ENCODE measurements at regions of chr2 and their contacts with region 1.

Region 1: DNA sequence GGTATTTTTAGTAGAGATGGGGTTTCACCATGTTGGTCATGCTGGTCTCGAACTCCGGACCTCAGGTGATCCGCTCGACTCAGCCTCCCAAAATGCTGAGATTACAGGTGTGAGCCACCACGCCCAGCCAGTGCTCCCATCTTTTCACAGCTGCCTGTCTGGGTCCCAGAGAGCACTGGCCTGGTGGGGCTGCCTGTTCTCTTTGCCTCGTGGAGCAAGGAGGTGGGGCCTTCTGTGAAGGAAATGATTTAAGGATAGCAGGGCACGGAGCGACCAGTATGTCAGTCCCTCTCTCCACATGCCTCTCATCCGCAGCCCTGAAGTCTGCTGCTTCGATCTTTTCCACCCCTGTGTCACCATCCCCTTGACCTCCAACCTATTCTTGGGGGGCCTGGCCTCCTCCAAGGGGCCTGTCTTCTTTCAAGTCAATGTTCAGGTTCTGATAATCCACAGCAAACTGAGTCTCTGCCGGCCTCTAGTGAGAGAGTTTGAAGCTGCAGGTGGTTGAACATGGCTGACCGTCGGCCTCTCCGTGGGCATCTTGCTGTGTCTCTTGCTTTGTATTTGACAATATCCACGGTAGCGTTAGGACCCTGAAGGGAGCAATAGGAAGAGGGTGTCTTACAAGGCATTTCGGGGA is 28.2 kb upstream of the GIGYF2 start:
- DNase-seq: peak; percentile 24
- ATAC-seq: peak; percentile 25; the same call in 1 of the 2 replicates
- H3K4me3 ChIP-seq: no peak overlapping the region
- H3K27ac ChIP-seq: no peak overlapping the region
- H3K4me1 ChIP-seq: peaks cover 9% of the 10 kb centered on the region; the same call in 1 of the 2 replicates
- H3K27me3 ChIP-seq: no peaks in the 10 kb centered on the region
- CTCF ChIP-seq: peak; percentile 68

Region 2: GRCh38 chr2:232611551-232612218 is 57.2 kb before region 1 on chr2:
- CTCF ChIA-PET with region 1: interaction called, 3 read pairs
- POLR2A ChIA-PET with region 1: no interaction called
- intact Hi-C with region 1: loop called (anchors 1 kb)
- DNase-seq: peak; percentile 93
- ATAC-seq: peak; percentile 97
- H3K4me3 ChIP-seq: no peak overlapping the region
- H3K27ac ChIP-seq: peak overlapping the region; percentile 38
- H3K4me1 ChIP-seq: peaks cover 23% of the 10 kb centered on the region
- H3K27me3 ChIP-seq: no peaks in the 10 kb centered on the region
- CTCF ChIP-seq: peak; percentile 95

Measured in PC-3 (cell line).